ENCODE measurements at regions of chr1 and their contacts with region 1.

Region 1: DNA sequence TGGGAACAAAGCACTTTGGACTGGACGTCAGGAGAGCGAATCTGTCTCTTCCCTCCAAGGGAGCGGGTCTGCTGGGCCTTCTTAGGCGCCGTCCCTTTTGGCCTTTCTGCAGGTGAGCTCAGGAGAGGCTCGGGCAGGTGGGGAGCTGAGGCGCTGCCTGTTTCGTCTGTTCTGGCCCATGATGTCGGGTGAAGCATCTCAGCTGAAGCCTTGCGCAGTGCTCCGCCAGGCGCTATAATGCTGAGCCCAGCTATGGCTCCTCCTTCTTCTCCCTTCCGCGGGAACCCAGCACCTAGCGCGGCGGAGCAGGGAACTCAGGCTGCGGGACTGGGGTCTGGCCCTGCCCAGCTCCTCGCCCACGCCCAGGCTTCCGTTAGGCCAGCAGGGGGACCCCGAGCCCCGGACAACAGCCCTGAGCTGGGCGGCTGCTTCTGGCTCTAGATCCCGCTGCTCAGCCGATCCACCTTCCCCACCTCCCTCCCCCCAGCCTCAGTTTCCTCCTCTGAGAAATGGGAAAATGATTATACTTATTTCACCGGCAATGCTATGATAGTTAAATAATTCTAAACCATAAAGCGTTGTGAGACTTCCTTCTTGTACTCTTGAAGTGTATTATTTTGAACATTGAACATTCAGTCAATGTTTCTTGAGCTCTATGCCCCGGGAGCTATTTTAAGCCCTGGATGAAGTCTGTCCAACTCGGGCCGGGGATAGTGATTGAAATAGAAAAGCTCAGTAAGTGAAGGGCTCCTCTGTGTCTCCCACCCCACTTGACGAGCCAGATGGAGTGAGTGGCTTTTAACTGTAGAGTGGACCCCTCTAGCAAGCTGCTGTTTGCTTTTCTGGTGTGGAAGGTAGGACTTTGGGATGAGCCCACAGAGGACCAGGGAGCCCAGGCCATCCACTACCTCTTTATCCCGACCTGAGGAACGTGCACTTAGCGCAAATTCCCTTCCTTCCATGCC is 9.6 kb upstream of the ADORA1 start:
- DNase-seq: peak in 1 of 2 donors; percentile 74
- H3K4me3 ChIP-seq: no peak overlapping the region
- H3K27ac ChIP-seq: no peak overlapping the region
- H3K4me1 ChIP-seq: peaks cover 0 to 3% of the 10 kb centered on the region in 2 donors
- H3K27me3 ChIP-seq: peaks cover 6% of the 10 kb centered on the region
- CTCF ChIP-seq: peak; percentile 73 to 81 (median 81)

Region 2: GRCh38 chr1:202796302-202797069 is 321.4 kb before region 1 on chr1:
- intact Hi-C with region 1: no loop called
- DNase-seq: no peak
- H3K4me3 ChIP-seq: no peak overlapping the region
- H3K27ac ChIP-seq: no peak overlapping the region
- H3K4me1 ChIP-seq: no peaks in the 10 kb centered on the region
- H3K27me3 ChIP-seq: no peaks in the 10 kb centered on the region
- CTCF ChIP-seq: no peak

Region 3: DNA sequence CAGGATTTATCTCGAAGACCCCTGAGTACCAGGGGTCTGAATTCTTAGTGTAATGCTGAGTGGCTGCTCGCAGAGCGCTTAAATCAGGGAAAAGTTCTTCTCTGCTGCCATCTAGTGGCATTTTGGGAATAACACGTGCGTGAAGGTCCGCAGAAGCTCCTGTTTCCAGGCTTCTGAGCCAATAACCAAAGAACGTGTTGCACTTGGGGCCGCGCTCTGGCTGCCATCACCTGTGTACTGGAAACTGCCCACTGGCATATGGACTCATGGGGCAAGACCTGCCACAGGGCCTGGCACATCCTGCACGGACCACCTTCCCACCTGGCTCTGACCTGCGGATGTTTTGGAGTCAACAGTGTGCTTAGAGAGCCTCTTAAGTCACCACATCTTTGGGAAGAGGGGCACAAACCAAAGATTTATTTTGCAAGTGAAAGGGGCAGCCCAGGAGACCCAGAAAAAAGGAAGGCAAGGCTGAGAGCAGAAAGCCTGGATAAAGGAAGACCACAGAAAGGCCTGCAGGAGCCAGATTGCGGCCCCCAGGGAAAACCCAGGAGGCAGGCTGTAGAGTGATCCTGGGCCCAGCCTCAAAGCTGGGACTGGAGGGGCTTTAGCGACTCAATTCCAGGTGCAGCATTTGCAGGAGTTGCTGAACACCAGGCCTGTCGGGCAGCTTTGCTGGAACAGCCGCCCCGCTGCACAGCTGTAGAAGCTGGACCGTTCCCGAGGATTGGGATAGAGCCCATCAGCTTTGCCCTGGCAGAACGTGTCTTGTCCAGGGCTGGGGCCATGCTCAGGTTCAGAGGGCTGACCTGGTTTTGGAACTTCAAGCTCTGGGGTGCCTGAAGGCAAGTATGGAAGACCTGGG is 98.6 kb after region 1 on chr1:
- intact Hi-C with region 1: loop called (anchors 1 kb)
- DNase-seq: peak in 1 of 2 donors; percentile 74
- H3K4me3 ChIP-seq: no peak overlapping the region
- H3K27ac ChIP-seq: no peak overlapping the region
- H3K4me1 ChIP-seq: no peaks in the 10 kb centered on the region
- H3K27me3 ChIP-seq: no peaks in the 10 kb centered on the region
- CTCF ChIP-seq: peak; percentile 75 to 88 (median 76)

Measured in ascending aorta (tissue), 2 donors.